ENCODE measurements at regions of chr12 and their contacts with region 1.

Region 1: GRCh38 chr12:20646239-20646827 is 48.8 kb upstream of the SLCO1C1 start:
- DNase-seq: no peak
- H3K4me3 Mint-ChIP-seq: no peak overlapping the region
- H3K27ac Mint-ChIP-seq: no peak overlapping the region
- H3K4me1 Mint-ChIP-seq: no peaks in the 10 kb centered on the region
- H3K27me3 Mint-ChIP-seq: no peaks in the 10 kb centered on the region

Region 2: GRCh38 chr12:20722142-20722541 is 75.8 kb after region 1 on chr12:
- CTCF ChIA-PET with region 1: no interaction called
- intact Hi-C with region 1: no loop called
- DNase-seq: no peak
- H3K4me3 Mint-ChIP-seq: no peak overlapping the region
- H3K27ac Mint-ChIP-seq: no peak overlapping the region
- H3K4me1 Mint-ChIP-seq: no peaks in the 10 kb centered on the region
- H3K27me3 Mint-ChIP-seq: no peaks in the 10 kb centered on the region

Region 3: GRCh38 chr12:20950248-20950647 is 303.9 kb after region 1 on chr12:
- CTCF ChIA-PET with region 1: no interaction called
- intact Hi-C with region 1: loop called (anchors 5 kb)
- DNase-seq: no peak
- H3K4me3 Mint-ChIP-seq: no peak overlapping the region
- H3K27ac Mint-ChIP-seq: no peak overlapping the region
- H3K4me1 Mint-ChIP-seq: no peaks in the 10 kb centered on the region
- H3K27me3 Mint-ChIP-seq: no peaks in the 10 kb centered on the region

Region 4: DNA sequence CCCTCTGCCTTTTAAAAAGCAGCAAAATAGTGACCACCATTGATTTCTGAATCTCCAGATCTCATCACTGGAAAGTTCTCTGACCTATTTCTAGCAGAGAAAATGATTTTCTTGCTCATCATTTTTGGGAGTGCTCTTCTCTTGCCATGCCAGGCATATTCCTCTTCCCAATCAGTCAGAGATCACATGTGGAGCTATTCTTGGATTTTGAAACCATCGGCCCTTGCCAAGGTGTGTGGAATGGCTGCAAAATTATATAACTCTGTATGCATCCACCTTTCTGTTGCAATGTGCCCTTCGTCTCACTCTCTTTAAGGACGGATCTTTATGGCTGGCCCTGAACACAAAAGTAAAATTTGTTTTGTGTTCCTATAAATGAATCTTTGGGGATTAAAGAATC is 1036.8 kb after region 1 on chr12:
- CTCF ChIA-PET with region 1: no interaction called
- intact Hi-C with region 1: loop called (anchors 5 kb)
- DNase-seq: no peak
- H3K4me3 Mint-ChIP-seq: no peak overlapping the region
- H3K27ac Mint-ChIP-seq: no peak overlapping the region
- H3K4me1 Mint-ChIP-seq: peaks cover 20% of the 10 kb centered on the region
- H3K27me3 Mint-ChIP-seq: no peaks in the 10 kb centered on the region